ENCODE measurements at regions of chr14 and their contacts with region 1.

Region 1: GRCh38 chr14:61730756-61731373 is 31.4 kb upstream of the SNAPC1 start:
- DNase-seq: peak; percentile 37 to 69 (median 58)
- H3K4me3 ChIP-seq: no peak overlapping the region
- H3K27ac ChIP-seq: no peak overlapping the region
- H3K4me1 ChIP-seq: no peaks in the 10 kb centered on the region
- H3K27me3 ChIP-seq: no peaks in the 10 kb centered on the region

Region 2: GRCh38 chr14:61461808-61462275 is 269.0 kb before region 1 on chr14:
- CTCF ChIA-PET with region 1: interaction called, 32 read pairs
- POLR2A ChIA-PET with region 1: no interaction called
- DNase-seq: peak; percentile 69 to 84 (median 80)
- H3K4me3 ChIP-seq: no peak overlapping the region
- H3K27ac ChIP-seq: no peak overlapping the region
- H3K4me1 ChIP-seq: peaks cover 0 to 16% (median 6%) of the 10 kb centered on the region in 4 experiments
- H3K27me3 ChIP-seq: no peaks in the 10 kb centered on the region

Region 3: DNA sequence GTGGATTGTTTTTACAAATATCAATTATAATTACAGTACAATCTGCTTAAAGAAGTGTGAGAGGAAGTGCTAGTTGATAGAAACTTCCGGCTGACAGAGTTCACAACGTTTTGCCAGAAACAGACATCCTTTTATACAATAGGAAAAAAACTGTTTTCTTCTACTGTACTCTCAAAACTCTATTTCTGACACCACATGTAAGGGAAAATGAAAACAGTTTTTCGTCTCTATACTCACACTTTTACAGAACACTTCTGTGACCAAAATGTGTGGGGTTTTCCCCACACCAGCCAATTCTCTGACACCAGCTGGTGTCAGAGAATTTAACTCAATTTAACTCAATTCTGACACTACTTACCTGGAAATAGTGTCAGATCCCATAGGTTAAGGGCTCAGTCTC is 59.8 kb before region 1 on chr14:
- CTCF ChIA-PET with region 1: no interaction called
- POLR2A ChIA-PET with region 1: no interaction called
- DNase-seq: peak in 2 of 3 donors; percentile 75 to 85
- H3K4me3 ChIP-seq: peak overlapping the region in 4 of 7 experiments; percentile 8 to 56 (median 40)
- H3K27ac ChIP-seq: peak overlapping the region; percentile 62 to 86
- H3K4me1 ChIP-seq: peaks cover 13 to 39% (median 23%) of the 10 kb centered on the region in 4 experiments
- H3K27me3 ChIP-seq: no peaks in the 10 kb centered on the region

Region 4: GRCh38 chr14:61719344-61720293 is 11.2 kb before region 1 on chr14:
- CTCF ChIA-PET with region 1: interaction called, 18 read pairs
- POLR2A ChIA-PET with region 1: no interaction called
- DNase-seq: peak; percentile 67 to 94 (median 89)
- H3K4me3 ChIP-seq: peak overlapping the region in 6 of 7 experiments; percentile 24 to 56 (median 44)
- H3K27ac ChIP-seq: peak overlapping the region; percentile 84 to 85
- H3K4me1 ChIP-seq: peaks cover 34 to 71% (median 44%) of the 10 kb centered on the region in 4 experiments
- H3K27me3 ChIP-seq: no peaks in the 10 kb centered on the region

Region 5: DNA sequence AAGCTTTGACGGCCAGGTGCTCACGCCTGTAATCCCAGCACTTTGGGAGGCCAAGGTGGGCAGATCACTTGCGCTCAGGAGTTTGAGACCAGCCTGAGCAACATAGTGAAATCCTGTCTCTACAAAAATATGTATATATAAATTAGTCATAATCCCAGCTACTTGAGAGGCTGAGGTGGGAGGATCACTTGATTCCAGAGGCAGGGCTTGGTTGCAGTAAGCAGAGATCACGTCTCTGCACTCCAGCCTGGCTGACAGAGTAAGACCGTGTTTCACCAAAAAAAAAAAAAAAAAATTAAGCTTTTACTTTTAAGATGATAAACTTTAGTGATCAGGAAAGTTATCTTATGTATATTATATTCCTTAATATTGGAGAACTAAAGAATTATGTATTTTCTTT is 13.4 kb after region 1 on chr14:
- CTCF ChIA-PET with region 1: interaction called, 19 read pairs
- POLR2A ChIA-PET with region 1: no interaction called
- DNase-seq: no peak
- H3K4me3 ChIP-seq: no peak overlapping the region
- H3K27ac ChIP-seq: peak overlapping the region in 1 of 2 experiments; percentile 22
- H3K4me1 ChIP-seq: no peaks in the 10 kb centered on the region
- H3K27me3 ChIP-seq: no peaks in the 10 kb centered on the region

Region 6: DNA sequence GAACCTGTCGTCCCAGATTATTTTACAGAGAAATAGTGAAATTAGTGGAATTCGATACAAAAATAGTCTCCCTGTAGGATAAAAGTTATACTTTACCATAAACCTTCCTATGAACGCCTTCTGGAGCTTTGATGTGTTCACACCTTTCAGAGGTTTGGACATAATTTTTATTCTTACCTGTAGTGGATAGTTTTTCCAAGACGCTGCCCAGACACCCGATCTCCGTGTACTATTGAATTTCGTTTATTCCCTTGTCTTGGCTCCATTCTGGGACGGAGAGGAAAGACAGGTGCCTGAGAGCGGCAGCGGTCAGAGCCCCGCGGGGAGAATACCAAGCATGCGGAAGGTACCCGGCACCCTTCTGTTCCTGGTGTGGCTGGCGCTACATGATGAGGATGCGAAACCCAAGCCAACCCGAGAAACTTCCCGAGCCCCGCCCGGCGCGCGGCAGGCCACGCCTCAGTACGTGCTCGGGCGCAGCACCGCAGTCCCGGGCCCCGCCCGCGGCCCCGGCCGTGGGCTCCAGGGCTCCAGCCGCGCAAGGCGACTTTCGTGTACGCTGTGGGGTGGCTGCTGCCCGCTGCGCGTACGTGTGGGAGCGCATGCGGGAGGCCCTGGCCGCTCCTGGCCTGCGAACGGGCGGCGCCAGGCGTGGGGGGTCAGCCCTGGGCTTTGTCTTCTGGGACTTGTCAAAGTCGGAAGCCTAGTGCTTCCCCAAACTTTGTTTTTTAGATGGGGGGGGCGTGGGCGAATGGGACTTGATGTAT is 20.0 kb after region 1 on chr14:
- CTCF ChIA-PET with region 1: interaction called, 10 read pairs
- POLR2A ChIA-PET with region 1: no interaction called
- DNase-seq: peak; percentile 84 to 89 (median 86)
- H3K4me3 ChIP-seq: peak overlapping the region; percentile 42 to 88 (median 66)
- H3K27ac ChIP-seq: peak overlapping the region in 1 of 2 experiments; percentile 76
- H3K4me1 ChIP-seq: peaks cover 0 to 28% (median 15%) of the 10 kb centered on the region in 4 experiments
- H3K27me3 ChIP-seq: no peaks in the 10 kb centered on the region

Region 7: GRCh38 chr14:61811882-61812760 is 81.3 kb after region 1 on chr14:
- CTCF ChIA-PET with region 1: no interaction called
- POLR2A ChIA-PET with region 1: no interaction called
- DNase-seq: peak in 1 of 3 donors; percentile 3
- H3K4me3 ChIP-seq: peak within 1 kb of the TSS in 6 of 7 experiments; percentile 38 to 74 (median 61)
- H3K27ac ChIP-seq: no peak within 1 kb of the TSS
- H3K4me1 ChIP-seq: peaks cover 0 to 8% (median 6%) of the 10 kb centered on the region in 4 experiments
- H3K27me3 ChIP-seq: peaks cover 13 to 66% (median 31%) of the 10 kb centered on the region in 5 experiments